IMR-90 (cell line): ENCODE measurements at regions of chr12 and their contacts with region 1.

Region 1: DNA sequence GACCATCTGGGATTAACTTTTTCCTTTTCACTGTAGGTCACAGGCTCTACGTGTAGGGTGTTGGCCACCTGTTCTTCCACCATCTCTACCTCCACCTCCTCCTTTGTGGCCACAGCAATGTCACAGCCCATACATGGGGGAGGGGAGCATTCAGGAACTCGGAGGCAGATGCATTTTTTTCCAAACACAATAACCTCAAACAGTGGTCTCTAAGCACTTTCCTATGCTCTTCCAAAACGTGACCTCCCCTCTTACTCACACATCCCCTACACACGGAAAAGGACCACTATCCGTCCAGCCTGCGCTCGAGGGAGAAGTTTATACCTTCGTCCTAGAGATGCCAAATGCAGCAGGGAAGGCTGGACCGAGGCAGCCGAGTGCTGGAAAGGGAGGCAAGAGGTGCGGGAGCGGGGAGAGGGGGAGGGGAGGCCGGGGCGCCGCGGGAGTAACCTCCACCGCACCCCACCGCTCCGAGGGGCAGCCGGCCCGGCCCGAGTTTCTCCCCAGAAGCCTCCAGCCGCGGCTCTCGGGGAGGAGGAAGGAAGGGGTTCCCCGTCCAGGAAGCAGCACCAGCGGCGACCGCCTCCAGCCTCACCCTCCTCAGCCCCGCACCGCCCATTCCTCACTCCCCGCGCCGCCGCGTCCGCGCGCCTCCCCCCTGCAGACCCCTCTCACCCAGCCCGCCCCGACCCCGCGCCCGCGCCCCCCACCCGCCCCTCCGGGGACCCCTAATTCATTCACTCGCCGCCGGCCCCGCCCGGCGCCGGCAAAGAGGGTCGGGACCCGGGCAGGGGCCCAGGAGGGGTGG is 594 bp downstream of the KRAS start:
- DNase-seq: peak; percentile 20
- ATAC-seq: peak; percentile 42
- H3K4me3 ChIP-seq: peak overlapping the region; percentile 95
- H3K27ac ChIP-seq: peak overlapping the region; percentile 94
- H3K4me1 ChIP-seq: peaks cover 5% of the 10 kb centered on the region; the same call in 1 of the 2 replicates
- H3K27me3 ChIP-seq: no peaks in the 10 kb centered on the region
- CTCF ChIP-seq: no peak
- POLR2A ChIP-seq: no peak
- RAD21 ChIP-seq: no peak; the same call in 1 of the 2 replicates

Region 2: GRCh38 chr12:25557830-25558436 is 307.8 kb after region 1 on chr12:
- CTCF ChIA-PET with region 1: no interaction called
- POLR2A ChIA-PET with region 1: no interaction called
- dilution Hi-C with region 1: no loop called
- in situ Hi-C with region 1: no loop called
- intact Hi-C with region 1: loop called (anchors 10 kb)
- DNase-seq: peak; percentile 43
- ATAC-seq: no peak
- H3K4me3 ChIP-seq: no peak overlapping the region
- H3K27ac ChIP-seq: no peak overlapping the region
- H3K4me1 ChIP-seq: peaks cover 2% of the 10 kb centered on the region
- H3K27me3 ChIP-seq: no peaks in the 10 kb centered on the region
- CTCF ChIP-seq: peak; percentile 55
- POLR2A ChIP-seq: no peak
- RAD21 ChIP-seq: peak; percentile 49; the same call in 1 of the 2 replicates

Region 3: GRCh38 chr12:26028953-26029735 is 779.0 kb after region 1 on chr12:
- CTCF ChIA-PET with region 1: no interaction called
- POLR2A ChIA-PET with region 1: no interaction called
- dilution Hi-C with region 1: no loop called
- in situ Hi-C with region 1: loop called (anchors 25 kb)
- intact Hi-C with region 1: loop called (anchors 10 kb)
- DNase-seq: peak; percentile 67
- ATAC-seq: peak; percentile 75
- H3K4me3 ChIP-seq: no peak overlapping the region
- H3K27ac ChIP-seq: no peak overlapping the region
- H3K4me1 ChIP-seq: peaks cover 9% of the 10 kb centered on the region
- H3K27me3 ChIP-seq: no peaks in the 10 kb centered on the region
- CTCF ChIP-seq: peak; percentile 84
- POLR2A ChIP-seq: no peak
- RAD21 ChIP-seq: peak; percentile 82

Region 4: DNA sequence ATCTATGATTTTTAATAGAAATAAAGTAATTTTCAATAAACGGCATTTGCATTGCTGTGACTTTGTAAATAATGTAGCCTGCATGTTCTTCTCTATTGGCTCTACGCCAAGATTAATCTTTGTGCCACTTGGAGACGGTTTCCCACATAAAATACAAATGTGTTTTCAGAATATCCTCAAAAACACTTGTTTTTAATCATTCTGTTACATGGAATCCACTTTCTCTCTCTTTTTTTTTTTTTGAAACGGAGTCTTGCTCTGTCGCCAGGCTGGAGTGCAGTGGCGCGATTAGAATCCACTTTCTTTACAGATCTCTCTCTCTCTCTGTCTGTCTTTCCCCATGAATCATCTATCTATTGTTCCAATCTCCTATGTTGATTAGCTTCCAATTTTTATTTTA is 922.4 kb after region 1 on chr12:
- CTCF ChIA-PET with region 1: no interaction called
- POLR2A ChIA-PET with region 1: no interaction called
- dilution Hi-C with region 1: no loop called
- in situ Hi-C with region 1: no loop called
- intact Hi-C with region 1: no loop called
- DNase-seq: no peak
- ATAC-seq: no peak
- H3K4me3 ChIP-seq: no peak overlapping the region
- H3K27ac ChIP-seq: no peak overlapping the region
- H3K4me1 ChIP-seq: no peaks in the 10 kb centered on the region
- H3K27me3 ChIP-seq: peaks cover 10% of the 10 kb centered on the region
- CTCF ChIP-seq: no peak
- POLR2A ChIP-seq: no peak
- RAD21 ChIP-seq: no peak